ENCODE measurements at regions of chr5 and their contacts with region 1.

Region 1: GRCh38 chr5:21688645-21689044 is 1164.5 kb downstream of the CDH12 start:
- H3K4me3 ChIP-seq: no peak overlapping the region
- H3K27ac ChIP-seq: no peak overlapping the region
- H3K4me1 ChIP-seq: no peaks in the 10 kb centered on the region
- CTCF ChIP-seq: no peak

Region 2: DNA sequence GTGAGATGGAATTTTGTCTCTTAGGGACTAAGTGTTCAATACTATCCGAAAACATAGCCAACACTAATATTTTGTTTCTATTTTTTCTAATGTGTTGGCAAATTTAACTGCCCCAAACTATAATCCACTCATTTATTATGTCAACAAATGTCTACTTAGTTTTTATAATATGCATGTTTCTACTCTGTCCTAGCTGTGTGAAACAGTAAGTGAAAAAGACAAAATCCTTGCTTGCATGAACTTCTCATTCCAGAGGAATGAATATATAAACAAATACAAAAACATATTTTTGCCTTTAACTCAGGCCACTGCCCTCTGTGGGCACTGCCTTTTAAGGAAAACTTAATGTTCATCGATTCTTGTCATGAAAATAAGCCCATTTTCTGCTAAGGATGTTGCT is 425.3 kb before region 1 on chr5:
- CTCF ChIA-PET with region 1: no interaction called
- POLR2A ChIA-PET with region 1: no interaction called
- H3K4me3 ChIP-seq: no peak overlapping the region
- H3K27ac ChIP-seq: no peak overlapping the region
- H3K4me1 ChIP-seq: no peaks in the 10 kb centered on the region
- CTCF ChIP-seq: no peak

Region 3: GRCh38 chr5:21615195-21615765 is 73.4 kb before region 1 on chr5:
- CTCF ChIA-PET with region 1: interaction called, 11 read pairs
- POLR2A ChIA-PET with region 1: no interaction called
- H3K4me3 ChIP-seq: no peak overlapping the region
- H3K27ac ChIP-seq: no peak overlapping the region
- H3K4me1 ChIP-seq: no peaks in the 10 kb centered on the region
- CTCF ChIP-seq: no peak